ENCODE measurements at regions of chr3 and their contacts with region 1.

Region 1: DNA sequence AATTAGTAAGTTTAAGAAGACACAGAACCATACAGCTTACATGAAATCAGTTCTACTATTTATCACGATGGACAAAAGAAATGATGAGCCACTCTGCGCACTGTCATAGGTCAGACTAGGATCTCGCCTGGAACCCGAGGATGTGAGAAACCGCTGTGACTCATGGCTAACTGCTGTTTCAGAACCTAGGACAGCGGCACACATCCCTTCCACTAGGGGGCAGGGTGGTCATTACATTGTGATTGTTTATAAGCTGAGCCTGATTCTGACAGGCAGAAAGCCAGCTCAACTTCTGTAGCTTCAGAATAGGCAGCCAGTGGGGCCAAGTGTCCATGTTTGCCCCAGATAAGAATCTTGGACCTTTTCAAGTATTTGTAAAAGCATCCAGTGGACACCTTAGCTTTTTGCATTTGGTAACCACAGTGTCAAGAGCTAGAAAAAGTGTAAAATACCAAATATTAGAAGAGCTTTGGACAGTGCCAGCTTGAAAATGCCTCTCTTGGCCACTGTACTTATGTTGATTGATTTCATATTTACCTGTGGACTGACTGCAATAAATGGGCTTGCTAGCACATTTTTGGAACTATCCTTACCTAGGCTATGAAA is 115.8 kb downstream of the KBTBD8 start:
- DNase-seq: peak; percentile 62
- ATAC-seq: peak; percentile 93
- H3K4me3 ChIP-seq: no peak overlapping the region
- H3K27ac ChIP-seq: no peak overlapping the region
- H3K4me1 ChIP-seq: no peaks in the 10 kb centered on the region
- H3K27me3 ChIP-seq: no peaks in the 10 kb centered on the region
- CTCF ChIP-seq: peak; percentile 72 to 94 (median 89)
- POLR2A ChIP-seq: no peak
- RAD21 ChIP-seq: peak; percentile 72

Region 2: GRCh38 chr3:65902304-65902793 is 1211.6 kb before region 1 on chr3:
- CTCF ChIA-PET with region 1: no interaction called
- POLR2A ChIA-PET with region 1: no interaction called
- RAD21 ChIA-PET with region 1: no interaction called
- intact Hi-C with region 1: no loop called
- DNase-seq: no peak
- ATAC-seq: no peak
- H3K4me3 ChIP-seq: no peak overlapping the region
- H3K27ac ChIP-seq: no peak overlapping the region
- H3K4me1 ChIP-seq: no peaks in the 10 kb centered on the region; a peak in 1 of 4 replicates
- H3K27me3 ChIP-seq: no peaks in the 10 kb centered on the region
- CTCF ChIP-seq: no peak
- POLR2A ChIP-seq: no peak
- RAD21 ChIP-seq: no peak

Region 3: GRCh38 chr3:66938338-66938963 is 175.5 kb before region 1 on chr3:
- CTCF ChIA-PET with region 1: interaction called, 10 read pairs
- POLR2A ChIA-PET with region 1: no interaction called
- RAD21 ChIA-PET with region 1: no interaction called
- intact Hi-C with region 1: no loop called
- DNase-seq: peak; percentile 44
- ATAC-seq: peak; percentile 91
- H3K4me3 ChIP-seq: no peak overlapping the region
- H3K27ac ChIP-seq: no peak overlapping the region
- H3K4me1 ChIP-seq: no peaks in the 10 kb centered on the region
- H3K27me3 ChIP-seq: peaks cover 37% of the 10 kb centered on the region
- CTCF ChIP-seq: peak; percentile 44 to 76 (median 69); a peak in 5 of 6 replicates
- POLR2A ChIP-seq: no peak
- RAD21 ChIP-seq: peak; percentile 71

Region 4: DNA sequence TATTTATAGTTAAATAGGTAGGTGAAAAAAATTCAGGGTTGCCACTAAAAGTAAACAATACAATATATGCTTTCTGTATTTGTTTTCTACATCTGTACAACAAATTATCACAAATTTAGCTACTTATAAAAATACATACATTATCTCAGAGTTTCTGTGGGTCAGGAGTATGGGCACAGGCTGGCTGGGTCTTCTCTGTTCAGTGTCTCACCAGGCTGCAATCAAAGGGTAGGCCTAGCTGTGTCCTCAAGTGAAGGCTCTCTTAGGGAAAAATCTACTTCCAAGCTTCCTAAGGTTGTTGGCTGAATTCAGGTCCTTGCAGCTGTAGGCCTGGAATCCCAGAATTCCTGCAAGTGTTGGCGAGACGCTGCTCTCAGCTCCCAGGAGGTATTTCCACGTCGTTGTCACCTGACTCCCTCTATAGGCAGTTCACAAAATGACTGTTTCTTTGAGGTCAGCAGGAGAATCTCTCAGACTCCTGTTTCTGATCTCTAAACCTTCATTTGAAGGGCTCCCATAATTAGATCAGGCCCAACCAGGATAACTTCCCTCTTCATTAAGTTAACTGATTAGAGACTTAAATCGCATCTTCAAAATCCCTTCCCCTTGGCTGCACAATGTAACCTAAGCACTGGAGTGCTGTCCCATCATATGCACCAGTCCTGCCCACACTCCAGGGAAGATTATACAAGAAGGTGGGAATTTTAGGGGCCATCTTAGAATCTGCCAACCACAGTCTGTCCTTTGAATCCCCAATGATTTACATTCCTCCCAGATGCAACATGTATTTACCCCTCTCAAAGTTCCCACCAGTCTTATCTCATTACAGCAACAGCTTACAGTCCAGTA is 243.9 kb after region 1 on chr3:
- CTCF ChIA-PET with region 1: interaction called, 20 read pairs
- POLR2A ChIA-PET with region 1: no interaction called
- RAD21 ChIA-PET with region 1: no interaction called
- intact Hi-C with region 1: loop called (anchors 5 kb)
- DNase-seq: peak; percentile 59
- ATAC-seq: peak; percentile 96
- H3K4me3 ChIP-seq: no peak overlapping the region
- H3K27ac ChIP-seq: no peak overlapping the region
- H3K4me1 ChIP-seq: peaks cover 0 to 5% of the 10 kb centered on the region in 2 experiments; a peak in 2 of 4 replicates
- H3K27me3 ChIP-seq: no peaks in the 10 kb centered on the region
- CTCF ChIP-seq: peak; percentile 19 to 49 (median 30); a peak in 4 of 6 replicates
- POLR2A ChIP-seq: no peak
- RAD21 ChIP-seq: peak; percentile 52

Region 5: DNA sequence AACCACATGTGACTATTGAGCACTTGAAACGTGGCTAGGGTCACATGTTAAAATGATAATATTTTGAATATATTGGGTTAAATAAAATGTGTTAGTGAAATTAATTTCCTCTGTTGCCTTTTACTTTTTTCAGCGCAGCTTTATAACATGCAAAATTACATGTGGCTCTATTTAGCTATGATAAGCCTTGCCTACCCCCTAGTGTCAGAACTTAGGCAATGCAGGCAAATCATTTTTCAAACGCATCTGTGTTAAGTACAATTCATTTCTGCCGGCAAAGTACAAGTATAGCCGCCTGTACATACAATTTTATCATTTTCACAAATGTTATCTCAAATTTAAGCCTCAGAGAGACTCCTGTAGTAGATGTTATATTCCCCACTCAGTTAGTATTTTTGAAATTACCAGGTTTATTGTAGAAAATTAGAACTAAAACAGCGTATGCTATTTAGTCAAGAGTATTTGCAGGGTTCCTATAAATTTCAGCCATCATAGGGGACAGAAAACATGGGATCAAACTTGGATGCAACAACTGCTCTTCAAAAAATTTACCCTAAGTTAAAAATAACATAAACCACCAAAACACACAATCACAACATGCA is 1762.3 kb after region 1 on chr3:
- CTCF ChIA-PET with region 1: interaction called, 22 read pairs
- POLR2A ChIA-PET with region 1: no interaction called
- RAD21 ChIA-PET with region 1: interaction called in 1 of 2 experiments, 3 read pairs
- intact Hi-C with region 1: loop called (anchors 2 kb)
- DNase-seq: peak; percentile 45
- ATAC-seq: peak; percentile 72
- H3K4me3 ChIP-seq: no peak overlapping the region
- H3K27ac ChIP-seq: no peak overlapping the region
- H3K4me1 ChIP-seq: no peaks in the 10 kb centered on the region
- H3K27me3 ChIP-seq: peaks cover 21% of the 10 kb centered on the region
- CTCF ChIP-seq: peak; percentile 52 to 85 (median 78); a peak in 5 of 6 replicates
- POLR2A ChIP-seq: no peak
- RAD21 ChIP-seq: peak; percentile 78

Region 6: GRCh38 chr3:68972358-68972979 is 1858.6 kb after region 1 on chr3:
- CTCF ChIA-PET with region 1: interaction called, 3 read pairs
- POLR2A ChIA-PET with region 1: no interaction called
- RAD21 ChIA-PET with region 1: no interaction called
- intact Hi-C with region 1: loop called (anchors 5 kb)
- DNase-seq: peak; percentile 44
- ATAC-seq: peak; percentile 99
- H3K4me3 ChIP-seq: no peak overlapping the region
- H3K27ac ChIP-seq: no peak overlapping the region
- H3K4me1 ChIP-seq: no peaks in the 10 kb centered on the region
- H3K27me3 ChIP-seq: peaks cover 31% of the 10 kb centered on the region
- CTCF ChIP-seq: peak; percentile 29 to 94 (median 91); a peak in 5 of 6 replicates
- POLR2A ChIP-seq: no peak
- RAD21 ChIP-seq: peak; percentile 74